ENCODE measurements at regions of chr20 and their contacts with region 1.

Region 1: DNA sequence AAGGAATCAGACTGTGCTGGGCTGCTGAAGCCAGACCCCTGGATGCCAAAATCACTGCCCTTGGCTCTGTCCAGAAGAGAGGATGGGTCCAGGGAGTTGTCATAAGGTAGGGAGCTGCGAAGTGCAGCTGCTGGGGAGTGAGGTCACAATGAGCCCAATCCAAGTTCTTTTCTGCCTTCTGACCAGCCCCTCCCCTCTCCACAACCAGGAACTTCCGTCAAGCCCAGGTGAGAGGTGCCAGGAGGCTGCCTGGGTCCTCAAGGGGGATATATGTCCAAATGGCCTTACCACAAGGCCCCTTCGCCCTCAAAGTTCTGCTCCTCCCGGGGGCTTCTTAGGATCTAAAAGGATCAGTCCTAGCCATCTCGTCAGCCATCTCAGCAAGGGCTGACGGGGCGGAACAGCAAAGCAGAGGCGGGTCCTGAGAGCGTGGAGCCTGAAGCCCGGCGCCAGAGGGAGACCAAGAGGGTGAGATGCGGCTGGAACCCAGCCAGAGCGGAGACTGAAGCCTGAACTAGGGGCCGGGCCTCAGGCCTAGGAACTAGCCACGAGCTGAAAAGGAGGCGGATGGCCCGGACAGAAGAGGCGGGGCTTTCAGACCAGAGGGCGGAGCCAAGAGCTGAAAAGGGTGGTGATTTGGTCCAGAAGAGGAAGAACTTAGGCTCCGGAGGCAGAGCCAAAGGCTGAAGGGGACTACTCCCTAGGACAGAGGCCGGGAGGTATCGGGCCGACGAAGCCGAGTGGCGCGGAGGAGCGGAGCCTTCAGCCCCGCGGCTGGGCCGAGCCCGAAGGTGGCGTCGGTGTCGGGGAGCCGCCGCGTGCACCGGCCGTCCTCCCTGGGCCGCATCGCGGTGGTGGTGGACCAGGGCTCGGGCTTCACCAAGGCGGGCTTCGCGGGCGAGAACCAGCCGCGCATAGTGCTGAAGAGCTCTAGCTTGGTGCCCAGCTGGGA is at the start of gene ACTL10:
- DNase-seq: peak; percentile 82 to 89
- ATAC-seq: peak; percentile 65 to 84 (median 67)
- H3K4me3 ChIP-seq: peak within 1 kb of the TSS; percentile 58
- H3K4me3 Mint-ChIP-seq: peak within 1 kb of the TSS; percentile 97
- H3K27ac ChIP-seq: peak within 1 kb of the TSS; percentile 53
- H3K27ac Mint-ChIP-seq: peak within 1 kb of the TSS; percentile 89 to 96
- H3K4me1 ChIP-seq: peaks cover 51% of the 10 kb centered on the region
- H3K4me1 Mint-ChIP-seq: peaks cover 26 to 44% of the 10 kb centered on the region in 2 donors
- H3K27me3 ChIP-seq: no peaks in the 10 kb centered on the region
- H3K27me3 Mint-ChIP-seq: no peaks in the 10 kb centered on the region
- CTCF ChIP-seq: no peak
- total RNA-seq, gene ACTL10: 0.80 to 2.2 (median 1.1) TPM

Region 2: DNA sequence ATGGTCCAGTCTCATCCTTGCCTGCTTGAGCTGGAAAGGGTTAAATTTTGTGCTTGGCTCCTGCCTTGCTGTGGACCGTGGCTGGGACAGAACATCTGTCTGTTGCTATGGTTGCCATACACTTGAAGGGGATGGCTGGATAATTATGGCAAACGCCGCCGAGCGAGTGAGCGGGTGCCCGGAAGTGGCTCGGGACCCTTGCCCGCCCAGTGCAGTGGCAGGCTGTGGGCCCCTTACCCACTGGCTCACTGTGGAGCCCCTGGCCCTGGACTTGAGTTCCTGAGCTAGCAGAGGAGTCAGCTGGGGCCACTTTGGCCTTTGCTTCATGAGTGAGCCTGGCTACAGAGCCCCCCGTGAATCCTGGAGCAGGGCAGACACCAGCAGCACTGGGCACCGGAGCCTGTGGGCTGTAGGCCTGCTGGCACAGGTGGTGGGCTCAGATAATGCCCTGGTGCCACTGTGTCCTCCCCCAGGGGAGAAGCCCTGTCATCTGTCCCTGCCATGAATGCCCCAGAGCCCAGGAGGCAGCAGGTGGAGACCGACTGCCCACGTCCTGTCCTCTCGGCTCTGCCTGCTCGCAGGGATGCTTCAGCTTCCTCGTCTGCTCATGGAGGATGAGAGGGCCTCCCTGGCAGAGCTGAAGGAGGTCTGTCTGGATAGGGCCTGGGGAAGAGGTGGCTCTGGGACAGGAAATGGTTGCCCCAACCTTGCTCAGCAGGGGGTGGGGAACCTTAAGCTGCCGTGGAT is 1055.9 kb before region 1 on chr20:
- intact Hi-C with region 1: no loop called
- DNase-seq: no peak
- ATAC-seq: no peak
- H3K4me3 ChIP-seq: no peak overlapping the region
- H3K4me3 Mint-ChIP-seq: no peak overlapping the region
- H3K27ac ChIP-seq: no peak overlapping the region
- H3K27ac Mint-ChIP-seq: no peak overlapping the region
- H3K4me1 ChIP-seq: peaks cover 4% of the 10 kb centered on the region
- H3K4me1 Mint-ChIP-seq: peaks cover 0 to 13% of the 10 kb centered on the region in 2 donors
- H3K27me3 ChIP-seq: no peaks in the 10 kb centered on the region
- H3K27me3 Mint-ChIP-seq: peaks cover 0 to 6% of the 10 kb centered on the region in 2 donors
- CTCF ChIP-seq: no peak

Region 3: DNA sequence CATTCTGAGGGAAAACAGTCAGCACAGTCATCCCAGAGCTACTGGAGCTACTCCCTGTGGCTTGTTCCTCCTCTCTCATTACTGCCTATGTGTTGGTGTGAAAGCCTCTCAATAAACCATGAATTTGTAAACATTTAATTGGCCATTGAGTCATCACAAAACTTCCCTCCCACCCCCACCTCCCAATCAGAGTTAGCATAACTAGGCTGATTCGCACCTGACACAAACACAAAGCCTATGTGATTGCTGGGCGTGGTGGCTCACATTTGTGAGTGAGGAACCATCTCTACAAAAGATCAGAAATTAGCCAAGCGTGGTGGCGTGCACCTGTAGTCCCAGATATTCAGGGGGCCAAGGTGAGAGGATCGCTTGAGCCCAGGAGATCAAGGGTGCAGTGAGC is 205.9 kb before region 1 on chr20:
- intact Hi-C with region 1: loop called (anchors 1 kb)
- DNase-seq: no peak
- ATAC-seq: no peak
- H3K4me3 ChIP-seq: no peak overlapping the region
- H3K4me3 Mint-ChIP-seq: no peak overlapping the region
- H3K27ac ChIP-seq: no peak overlapping the region
- H3K27ac Mint-ChIP-seq: no peak overlapping the region
- H3K4me1 ChIP-seq: peaks cover 4% of the 10 kb centered on the region
- H3K4me1 Mint-ChIP-seq: no peaks in the 10 kb centered on the region
- H3K27me3 ChIP-seq: no peaks in the 10 kb centered on the region
- H3K27me3 Mint-ChIP-seq: no peaks in the 10 kb centered on the region
- CTCF ChIP-seq: no peak

Region 4: GRCh38 chr20:33686100-33686983 is 19.8 kb after region 1 on chr20 and contains the start of gene E2F1:
- intact Hi-C with region 1: loop called (anchors 2 kb)
- DNase-seq: peak; percentile 94 to 95
- ATAC-seq: peak; percentile 91 to 97 (median 96)
- H3K4me3 ChIP-seq: peak within 1 kb of the TSS; percentile 25
- H3K4me3 Mint-ChIP-seq: peak within 1 kb of the TSS; percentile 83
- H3K27ac ChIP-seq: peak within 1 kb of the TSS; percentile 49
- H3K27ac Mint-ChIP-seq: peak within 1 kb of the TSS; percentile 73 to 85
- H3K4me1 ChIP-seq: peaks cover 39% of the 10 kb centered on the region
- H3K4me1 Mint-ChIP-seq: peaks cover 19 to 24% of the 10 kb centered on the region in 2 donors
- H3K27me3 ChIP-seq: no peaks in the 10 kb centered on the region
- H3K27me3 Mint-ChIP-seq: no peaks in the 10 kb centered on the region
- CTCF ChIP-seq: peak; percentile 16
- total RNA-seq, gene E2F1: 4.6 to 5.6 (median 4.7) TPM

Region 5: GRCh38 chr20:33825340-33826269 is 159.0 kb after region 1 on chr20:
- intact Hi-C with region 1: no loop called
- DNase-seq: no peak
- ATAC-seq: no peak
- H3K4me3 ChIP-seq: no peak overlapping the region
- H3K4me3 Mint-ChIP-seq: no peak overlapping the region
- H3K27ac ChIP-seq: no peak overlapping the region
- H3K27ac Mint-ChIP-seq: peak overlapping the region; percentile 51 to 69
- H3K4me1 ChIP-seq: peaks cover 10% of the 10 kb centered on the region
- H3K4me1 Mint-ChIP-seq: peaks cover 67 to 69% of the 10 kb centered on the region in 2 donors
- H3K27me3 ChIP-seq: no peaks in the 10 kb centered on the region
- H3K27me3 Mint-ChIP-seq: no peaks in the 10 kb centered on the region
- CTCF ChIP-seq: no peak

Measured in natural killer cell (primary cell).